CD4-positive, alpha-beta T cell (primary cell): ENCODE measurements at regions of chr12 and their contacts with region 1.

Region 1: DNA sequence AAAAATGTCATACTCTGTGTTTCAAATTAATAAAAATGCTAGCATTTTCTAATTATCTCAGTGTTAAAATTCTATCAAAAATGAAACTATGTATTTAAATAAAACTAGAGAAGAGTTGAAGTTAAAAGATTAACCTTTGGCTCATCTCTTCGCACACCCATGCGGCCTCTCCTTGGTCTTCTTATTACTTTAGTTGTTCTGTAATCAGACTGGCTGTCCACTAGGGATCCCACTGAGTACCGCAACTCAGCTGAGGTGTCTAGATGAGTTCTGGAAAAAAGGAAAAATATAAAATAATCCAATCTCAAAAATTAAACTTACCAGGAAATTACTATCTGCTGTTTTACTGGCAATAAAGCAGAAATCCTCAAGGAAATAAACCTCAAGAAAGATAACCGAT is 280.1 kb downstream of the ACSS3 start:
- DNase-seq: no peak
- ATAC-seq: no peak
- H3K4me3 ChIP-seq: no peak overlapping the region
- H3K4me3 Mint-ChIP-seq: no peak overlapping the region
- H3K27ac ChIP-seq: no peak overlapping the region
- H3K27ac Mint-ChIP-seq: no peak overlapping the region
- H3K4me1 ChIP-seq: no peaks in the 10 kb centered on the region
- H3K4me1 Mint-ChIP-seq: no peaks in the 10 kb centered on the region
- H3K27me3 ChIP-seq: no peaks in the 10 kb centered on the region
- H3K27me3 Mint-ChIP-seq: no peaks in the 10 kb centered on the region
- CTCF ChIP-seq: no peak

Region 2: DNA sequence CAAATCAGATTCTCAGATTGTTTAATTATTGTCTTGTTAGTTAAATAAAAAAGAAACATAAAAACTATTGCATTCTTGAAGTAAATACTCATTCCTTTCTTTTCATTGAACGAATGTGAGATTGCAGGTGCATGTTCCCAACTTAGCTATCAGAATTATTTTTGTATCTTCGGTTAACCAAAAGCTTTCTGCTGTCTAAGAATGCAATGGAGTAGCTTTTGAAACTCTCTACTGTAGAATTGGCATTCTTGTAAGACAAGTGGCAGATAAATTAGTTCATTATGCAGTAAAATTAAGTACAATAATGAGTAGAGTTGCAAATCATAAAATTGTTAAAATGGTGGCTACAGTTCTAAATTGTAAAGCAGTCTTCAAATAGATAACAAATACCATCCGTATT is 18.0 kb after region 1 on chr12:
- CTCF ChIA-PET with region 1: no interaction called
- POLR2A ChIA-PET with region 1: no interaction called
- intact Hi-C with region 1: loop called in 1 of 2 experiments (anchors 2 kb)
- DNase-seq: no peak
- ATAC-seq: no peak
- H3K4me3 ChIP-seq: no peak overlapping the region
- H3K4me3 Mint-ChIP-seq: no peak overlapping the region
- H3K27ac ChIP-seq: no peak overlapping the region
- H3K27ac Mint-ChIP-seq: no peak overlapping the region
- H3K4me1 ChIP-seq: no peaks in the 10 kb centered on the region
- H3K4me1 Mint-ChIP-seq: no peaks in the 10 kb centered on the region
- H3K27me3 ChIP-seq: no peaks in the 10 kb centered on the region
- H3K27me3 Mint-ChIP-seq: no peaks in the 10 kb centered on the region
- CTCF ChIP-seq: no peak